ENCODE measurements at regions of chr2 and their contacts with region 1.

Region 1: GRCh38 chr2:217785544-217786045 is 217.2 kb downstream of the TNS1 start:
- DNase-seq: peak; percentile 73 to 83
- ATAC-seq: peak; percentile 56 to 76 (median 73)
- H3K4me3 ChIP-seq: no peak overlapping the region
- H3K4me3 Mint-ChIP-seq: no peak overlapping the region
- H3K27ac ChIP-seq: no peak overlapping the region
- H3K27ac Mint-ChIP-seq: peak overlapping the region in 1 of 2 donors; percentile 57
- H3K4me1 ChIP-seq: peaks cover 21% of the 10 kb centered on the region
- H3K4me1 Mint-ChIP-seq: peaks cover 14 to 30% of the 10 kb centered on the region in 2 donors
- H3K27me3 ChIP-seq: no peaks in the 10 kb centered on the region
- H3K27me3 Mint-ChIP-seq: no peaks in the 10 kb centered on the region
- CTCF ChIP-seq: peak; percentile 93

Region 2: GRCh38 chr2:217421834-217422233 is 363.8 kb before region 1 on chr2:
- intact Hi-C with region 1: no loop called
- DNase-seq: no peak
- ATAC-seq: no peak
- H3K4me3 ChIP-seq: no peak overlapping the region
- H3K4me3 Mint-ChIP-seq: no peak overlapping the region
- H3K27ac ChIP-seq: no peak overlapping the region
- H3K27ac Mint-ChIP-seq: no peak overlapping the region
- H3K4me1 ChIP-seq: no peaks in the 10 kb centered on the region
- H3K4me1 Mint-ChIP-seq: no peaks in the 10 kb centered on the region
- H3K27me3 ChIP-seq: peaks cover 3% of the 10 kb centered on the region
- H3K27me3 Mint-ChIP-seq: peaks cover 13 to 19% of the 10 kb centered on the region in 2 donors
- CTCF ChIP-seq: no peak

Region 3: DNA sequence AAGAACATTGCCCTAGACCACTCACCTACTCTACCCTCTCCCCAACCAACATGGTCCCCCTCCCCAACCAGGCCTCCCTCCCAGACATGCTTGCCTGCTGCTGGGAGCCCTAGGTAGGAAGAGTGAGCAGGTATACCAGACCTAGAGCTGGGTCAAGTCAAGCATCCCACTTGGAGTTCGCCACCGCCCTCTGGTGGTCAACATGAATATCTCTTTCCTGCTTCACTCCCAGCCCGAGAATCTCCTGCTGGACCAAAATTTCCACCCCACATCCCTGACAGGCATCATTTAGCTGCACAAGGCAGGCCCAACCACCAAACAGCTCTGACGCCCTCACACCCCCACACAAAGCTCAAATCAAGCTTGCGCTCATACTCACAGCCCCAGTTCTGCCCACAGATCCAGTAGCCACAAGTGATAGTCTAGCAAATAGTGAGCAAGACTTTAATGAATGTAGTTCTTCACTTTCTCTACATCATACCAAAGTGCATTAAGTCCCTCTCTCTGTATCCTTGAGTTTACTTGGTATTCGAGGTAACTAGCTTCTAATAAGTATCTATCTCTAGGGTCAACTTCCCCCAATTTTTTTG is 101.2 kb after region 1 on chr2:
- intact Hi-C with region 1: loop called (anchors 1 kb)
- DNase-seq: peak; percentile 58 to 75
- ATAC-seq: peak; percentile 41 to 80 (median 71)
- H3K4me3 ChIP-seq: no peak overlapping the region
- H3K4me3 Mint-ChIP-seq: no peak overlapping the region
- H3K27ac ChIP-seq: no peak overlapping the region
- H3K27ac Mint-ChIP-seq: no peak overlapping the region
- H3K4me1 ChIP-seq: peaks cover 7% of the 10 kb centered on the region
- H3K4me1 Mint-ChIP-seq: peaks cover 0 to 10% of the 10 kb centered on the region in 2 donors
- H3K27me3 ChIP-seq: no peaks in the 10 kb centered on the region
- H3K27me3 Mint-ChIP-seq: peaks cover 12 to 16% of the 10 kb centered on the region in 2 donors
- CTCF ChIP-seq: peak; percentile 70

Region 4: DNA sequence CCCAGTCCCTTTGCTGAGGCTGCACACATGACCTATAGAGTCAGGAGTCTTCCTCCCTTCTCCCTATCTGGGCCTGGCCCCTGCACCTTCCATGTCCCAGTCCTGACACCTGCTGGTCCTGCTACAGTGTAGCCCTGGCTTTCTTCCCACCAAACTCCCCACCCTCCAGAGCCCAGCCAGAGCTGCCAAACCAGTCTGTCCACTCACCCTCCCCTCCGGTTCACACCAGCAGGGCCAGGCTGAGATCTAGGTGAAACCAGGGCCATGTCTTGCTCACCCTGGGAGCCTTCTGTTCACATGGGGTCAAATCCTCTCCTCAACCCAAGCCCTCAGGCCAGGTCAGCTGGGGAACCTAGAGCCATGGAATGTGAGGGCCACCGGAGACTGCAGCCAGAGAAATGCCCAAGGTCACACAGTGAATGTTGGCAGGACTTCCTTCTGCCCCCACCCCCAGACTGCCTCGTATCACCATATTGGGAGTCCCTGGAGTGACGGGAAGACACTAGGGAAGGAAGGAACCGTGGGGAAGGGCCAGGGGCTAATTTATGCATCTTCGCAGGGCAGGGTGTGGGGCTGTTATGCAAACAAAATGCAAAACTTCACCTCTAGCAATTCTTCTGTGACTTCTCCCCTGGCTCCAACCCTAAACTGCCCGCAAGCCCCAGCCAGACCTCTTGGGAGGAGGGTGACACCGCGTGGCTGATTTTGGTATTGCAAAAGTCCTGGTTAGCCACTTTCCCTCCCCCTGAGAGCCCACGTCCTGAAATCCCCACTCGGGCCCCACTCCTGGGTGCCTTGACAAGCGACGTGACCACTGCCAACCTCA is 202.6 kb after region 1 on chr2:
- intact Hi-C with region 1: loop called (anchors 1 kb)
- DNase-seq: peak; percentile 62 to 64
- ATAC-seq: peak; percentile 55 to 90 (median 88)
- H3K4me3 ChIP-seq: no peak overlapping the region
- H3K4me3 Mint-ChIP-seq: no peak overlapping the region
- H3K27ac ChIP-seq: no peak overlapping the region
- H3K27ac Mint-ChIP-seq: no peak overlapping the region
- H3K4me1 ChIP-seq: no peaks in the 10 kb centered on the region
- H3K4me1 Mint-ChIP-seq: peaks cover 0 to 4% of the 10 kb centered on the region in 2 donors
- H3K27me3 ChIP-seq: no peaks in the 10 kb centered on the region
- H3K27me3 Mint-ChIP-seq: peaks cover 0 to 12% of the 10 kb centered on the region in 2 donors
- CTCF ChIP-seq: peak; percentile 70

Region 5: GRCh38 chr2:218033590-218034496 is 248.2 kb after region 1 on chr2:
- intact Hi-C with region 1: loop called (anchors 1 kb)
- DNase-seq: peak in 1 of 2 donors; percentile 26
- ATAC-seq: peak; percentile 8 to 52 (median 31)
- H3K4me3 ChIP-seq: peak overlapping the region; percentile 29
- H3K4me3 Mint-ChIP-seq: peak overlapping the region; percentile 69
- H3K27ac ChIP-seq: no peak overlapping the region
- H3K27ac Mint-ChIP-seq: peak overlapping the region in 1 of 2 donors; percentile 65
- H3K4me1 ChIP-seq: peaks cover 21% of the 10 kb centered on the region
- H3K4me1 Mint-ChIP-seq: peaks cover 7 to 22% of the 10 kb centered on the region in 2 donors
- H3K27me3 ChIP-seq: peaks cover 2% of the 10 kb centered on the region
- H3K27me3 Mint-ChIP-seq: peaks cover 9 to 16% of the 10 kb centered on the region in 2 donors
- CTCF ChIP-seq: no peak

Region 6: GRCh38 chr2:218063486-218063885 is 277.9 kb after region 1 on chr2:
- intact Hi-C with region 1: loop called (anchors 1 kb)
- DNase-seq: no peak
- ATAC-seq: peak in 2 of 3 donors; percentile 21 to 41
- H3K4me3 ChIP-seq: no peak overlapping the region
- H3K4me3 Mint-ChIP-seq: no peak overlapping the region
- H3K27ac ChIP-seq: no peak overlapping the region
- H3K27ac Mint-ChIP-seq: no peak overlapping the region
- H3K4me1 ChIP-seq: peaks cover 18% of the 10 kb centered on the region
- H3K4me1 Mint-ChIP-seq: peaks cover 8 to 18% of the 10 kb centered on the region in 2 donors
- H3K27me3 ChIP-seq: no peaks in the 10 kb centered on the region
- H3K27me3 Mint-ChIP-seq: peaks cover 18 to 22% of the 10 kb centered on the region in 2 donors
- CTCF ChIP-seq: no peak

Region 7: DNA sequence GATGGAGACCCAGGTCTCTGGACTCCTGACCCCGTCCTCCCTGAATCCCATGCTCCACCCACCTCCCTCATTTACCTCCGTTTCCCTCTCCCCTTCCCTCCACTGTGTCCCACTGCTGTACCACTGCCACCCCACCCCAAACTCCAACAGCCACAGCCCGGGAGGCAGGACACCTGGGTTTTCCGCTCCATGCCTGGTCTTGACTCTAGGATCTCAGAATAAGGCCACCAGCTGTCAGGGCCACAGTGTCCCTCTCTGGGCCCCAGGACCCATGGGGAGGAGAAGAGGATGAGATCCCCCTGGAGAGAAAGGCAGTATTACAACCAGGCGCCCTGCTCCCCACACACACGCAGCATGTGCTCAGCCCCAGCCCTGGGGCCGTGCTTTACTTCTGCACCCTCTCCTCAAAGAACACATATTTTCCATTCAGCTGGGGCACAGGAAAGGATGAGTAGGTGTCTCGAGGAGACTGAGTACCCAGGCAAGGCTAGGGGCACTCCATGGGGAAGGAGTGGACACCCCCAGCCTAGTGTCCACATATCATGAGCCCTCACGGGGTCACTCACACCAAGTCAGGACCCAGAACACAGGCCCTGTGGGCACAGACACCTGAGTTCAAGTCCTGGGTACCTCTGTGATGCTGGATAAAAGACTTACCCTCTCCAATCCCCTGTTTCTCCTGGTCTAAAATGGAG is 284.2 kb after region 1 on chr2:
- intact Hi-C with region 1: loop called (anchors 1 kb)
- DNase-seq: no peak
- ATAC-seq: no peak
- H3K4me3 ChIP-seq: no peak overlapping the region
- H3K4me3 Mint-ChIP-seq: peak overlapping the region; percentile 42
- H3K27ac ChIP-seq: no peak overlapping the region
- H3K27ac Mint-ChIP-seq: peak overlapping the region in 1 of 2 donors; percentile 51
- H3K4me1 ChIP-seq: peaks cover 17% of the 10 kb centered on the region
- H3K4me1 Mint-ChIP-seq: peaks cover 8 to 35% of the 10 kb centered on the region in 2 donors
- H3K27me3 ChIP-seq: no peaks in the 10 kb centered on the region
- H3K27me3 Mint-ChIP-seq: peaks cover 0 to 9% of the 10 kb centered on the region in 2 donors
- CTCF ChIP-seq: no peak

Measured in natural killer cell (primary cell).